ENCODE measurements at regions of chr2 and their contacts with region 1.

Region 1: DNA sequence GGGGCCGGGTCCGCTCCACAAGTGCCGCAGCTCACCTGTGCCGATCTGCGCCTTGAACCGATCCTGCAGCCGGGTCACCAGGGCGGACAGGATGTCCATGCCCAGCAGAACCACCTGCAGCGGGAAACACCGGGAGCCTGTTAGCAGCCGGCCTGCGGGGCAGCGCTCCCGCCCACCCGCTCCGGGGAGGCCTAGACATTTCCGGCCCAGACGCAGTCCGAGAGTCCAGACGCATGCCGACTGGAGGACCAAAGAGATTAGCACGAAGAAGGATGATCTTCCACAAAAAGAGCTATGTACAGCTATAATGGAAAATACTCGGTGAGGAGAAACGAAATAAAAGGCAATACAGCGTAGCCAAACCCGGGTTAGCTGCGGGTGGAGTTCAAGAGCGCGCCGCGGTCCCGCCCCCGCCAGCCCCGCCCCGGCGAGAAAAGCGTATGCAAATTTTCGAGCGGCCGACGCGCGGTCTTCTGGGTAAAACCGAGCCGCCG is 421 bp upstream of the RNU4ATAC start:
- DNase-seq: peak; percentile 81
- H3K4me3 ChIP-seq: peak overlapping the region; percentile 85
- H3K27ac ChIP-seq: peak overlapping the region; percentile 98
- H3K4me1 ChIP-seq: peaks cover 94% of the 10 kb centered on the region
- H3K27me3 ChIP-seq: no peaks in the 10 kb centered on the region
- CTCF ChIP-seq: no peak

Region 2: GRCh38 chr2:121104721-121105141 is 425.5 kb before region 1 on chr2:
- intact Hi-C with region 1: no loop called
- DNase-seq: no peak
- H3K4me3 ChIP-seq: no peak overlapping the region
- H3K27ac ChIP-seq: no peak overlapping the region
- H3K4me1 ChIP-seq: peaks cover 9% of the 10 kb centered on the region
- H3K27me3 ChIP-seq: peaks cover 16% of the 10 kb centered on the region
- CTCF ChIP-seq: no peak

Region 3: GRCh38 chr2:121640385-121641316 is 110.4 kb after region 1 on chr2:
- intact Hi-C with region 1: loop called (anchors 5 kb)
- DNase-seq: no peak
- H3K4me3 ChIP-seq: no peak overlapping the region
- H3K27ac ChIP-seq: peak overlapping the region; percentile 63
- H3K4me1 ChIP-seq: peaks cover 56% of the 10 kb centered on the region
- H3K27me3 ChIP-seq: no peaks in the 10 kb centered on the region
- CTCF ChIP-seq: no peak

Region 4: GRCh38 chr2:121686218-121686617 is 156.0 kb after region 1 on chr2:
- intact Hi-C with region 1: no loop called
- DNase-seq: no peak
- H3K4me3 ChIP-seq: no peak overlapping the region
- H3K27ac ChIP-seq: no peak overlapping the region
- H3K4me1 ChIP-seq: peaks cover 11% of the 10 kb centered on the region
- H3K27me3 ChIP-seq: no peaks in the 10 kb centered on the region
- CTCF ChIP-seq: no peak